Naive thymus-derived CD4-positive, alpha-beta T cell (primary cell): ENCODE measurements at regions of chr5 and their contacts with region 1.

Region 1: GRCh38 chr5:157540707-157541446 is 34.7 kb downstream of the ADAM19 start:
- DNase-seq: peak in 1 of 9 donors; percentile 57
- ATAC-seq: peak; percentile 51
- H3K4me3 ChIP-seq: peak overlapping the region; percentile 19
- H3K4me3 Mint-ChIP-seq: peak overlapping the region in 5 of 10 donors; percentile 7 to 81 (median 12)
- H3K27ac ChIP-seq: no peak overlapping the region
- H3K27ac Mint-ChIP-seq: peak overlapping the region in 7 of 9 donors; percentile 2 to 99 (median 45)
- H3K4me1 ChIP-seq: peaks cover 14 to 65% of the 10 kb centered on the region in 2 donors
- H3K4me1 Mint-ChIP-seq: peaks cover 12 to 92% (median 29%) of the 10 kb centered on the region in 7 donors
- H3K27me3 ChIP-seq: no peaks in the 10 kb centered on the region
- H3K27me3 Mint-ChIP-seq: no peaks in the 10 kb centered on the region

Region 2: DNA sequence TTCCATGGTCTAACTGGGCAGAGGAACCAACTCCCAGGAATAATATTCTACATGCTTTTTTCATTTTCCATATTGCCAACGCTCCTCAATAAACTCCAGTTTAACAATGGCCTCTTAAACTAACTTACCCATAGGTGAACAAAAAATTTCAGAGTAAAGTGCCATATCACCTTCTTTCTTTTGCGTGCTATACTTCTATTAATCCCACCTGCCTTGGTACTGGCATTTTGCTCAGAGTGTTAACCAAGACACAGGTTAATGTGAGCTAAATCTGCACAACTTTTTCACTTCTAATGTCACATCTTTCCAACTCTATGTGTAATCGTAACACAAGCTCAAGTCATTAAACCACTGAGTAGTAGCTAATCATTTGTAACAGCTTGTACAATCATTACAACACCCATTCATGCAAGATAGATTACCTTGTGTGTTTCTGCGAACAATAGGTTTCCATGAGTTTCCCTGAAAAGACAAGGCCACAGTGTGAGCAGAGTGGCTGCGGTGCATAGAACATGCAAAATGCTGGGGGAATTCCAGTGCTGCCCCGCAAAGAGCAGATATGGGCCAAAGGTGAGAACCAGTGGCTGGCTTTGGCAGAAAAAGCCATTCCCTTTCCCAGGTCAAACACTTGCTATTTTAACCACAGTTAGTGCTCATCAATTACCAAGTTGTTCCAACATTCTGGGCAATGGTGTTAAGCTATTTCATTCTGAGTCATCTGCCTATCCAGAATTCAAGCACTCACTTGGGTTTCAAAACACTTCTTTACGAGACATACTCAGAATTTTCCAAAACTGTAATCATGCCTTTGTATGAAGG is 620.6 kb before region 1 on chr5:
- CTCF ChIA-PET with region 1: no interaction called
- POLR2A ChIA-PET with region 1: no interaction called
- intact Hi-C with region 1: loop called in 1 of 2 experiments (anchors 10 kb)
- DNase-seq: peak in 1 of 9 donors; percentile 76
- ATAC-seq: peak; percentile 46
- H3K4me3 ChIP-seq: no peak overlapping the region
- H3K4me3 Mint-ChIP-seq: peak overlapping the region in 1 of 10 donors; percentile 79
- H3K27ac ChIP-seq: no peak overlapping the region
- H3K27ac Mint-ChIP-seq: peak overlapping the region in 7 of 9 donors; percentile 18 to 94 (median 52)
- H3K4me1 ChIP-seq: peaks cover 9 to 10% of the 10 kb centered on the region in 2 donors
- H3K4me1 Mint-ChIP-seq: peaks cover 12 to 78% (median 67%) of the 10 kb centered on the region in 7 donors
- H3K27me3 ChIP-seq: no peaks in the 10 kb centered on the region
- H3K27me3 Mint-ChIP-seq: no peaks in the 10 kb centered on the region

Region 3: DNA sequence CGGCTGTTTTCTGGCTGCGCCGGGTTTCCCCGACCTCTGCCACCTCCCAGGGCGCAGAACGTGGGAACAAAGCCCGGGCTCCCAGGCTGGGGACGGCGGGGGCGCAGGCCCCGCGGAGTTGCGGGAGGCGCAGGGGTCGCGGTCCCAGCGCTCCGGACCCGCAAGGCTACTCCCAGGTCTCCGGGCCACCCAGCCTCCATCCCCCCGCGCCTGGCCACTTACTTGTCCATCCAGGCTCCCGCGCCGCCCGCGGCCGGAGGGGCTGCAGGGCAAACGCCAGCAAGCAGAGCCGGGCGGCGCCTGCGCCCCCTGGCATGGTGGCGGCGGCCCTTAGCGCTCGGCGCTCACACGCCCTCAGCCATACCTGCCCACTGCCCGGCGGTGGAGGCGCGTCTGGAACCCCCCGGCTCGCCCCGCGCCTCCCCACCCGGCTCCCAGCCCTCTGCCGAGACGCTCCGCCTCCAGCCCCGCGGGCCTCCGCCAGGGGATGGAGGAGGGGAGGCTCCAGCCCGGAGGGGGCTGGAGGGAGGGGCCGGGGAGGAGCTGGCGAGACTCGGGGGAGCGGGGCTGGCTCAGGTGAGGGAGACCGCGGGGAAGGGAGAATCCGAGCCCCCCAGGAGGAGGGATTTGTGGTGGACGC is 34.6 kb after region 1 on chr5 and contains the start of gene ADAM19:
- CTCF ChIA-PET with region 1: no interaction called
- POLR2A ChIA-PET with region 1: interaction called, 3 read pairs
- intact Hi-C with region 1: loop called in 1 of 2 experiments (anchors 1 kb)
- DNase-seq: peak in 4 of 9 donors; percentile 15 to 72 (median 24)
- ATAC-seq: peak; percentile 68
- H3K4me3 ChIP-seq: peak within 1 kb of the TSS; percentile 45
- H3K4me3 Mint-ChIP-seq: peak within 1 kb of the TSS; percentile 85 to 99 (median 94)
- H3K27ac ChIP-seq: no peak within 1 kb of the TSS
- H3K27ac Mint-ChIP-seq: peak within 1 kb of the TSS in 5 of 9 donors; percentile 2 to 92 (median 65)
- H3K4me1 ChIP-seq: peaks cover 11% of the 10 kb centered on the region in 2 donors
- H3K4me1 Mint-ChIP-seq: peaks cover 16 to 73% (median 24%) of the 10 kb centered on the region in 7 donors
- H3K27me3 ChIP-seq: no peaks in the 10 kb centered on the region
- H3K27me3 Mint-ChIP-seq: peaks cover 0 to 14% (median 11%) of the 10 kb centered on the region in 5 donors
- total RNA-seq, gene ADAM19: 0.81 to 410 (median 7.3) TPM